ENCODE measurements at regions of chr15 and their contacts with region 1.

Region 1: DNA sequence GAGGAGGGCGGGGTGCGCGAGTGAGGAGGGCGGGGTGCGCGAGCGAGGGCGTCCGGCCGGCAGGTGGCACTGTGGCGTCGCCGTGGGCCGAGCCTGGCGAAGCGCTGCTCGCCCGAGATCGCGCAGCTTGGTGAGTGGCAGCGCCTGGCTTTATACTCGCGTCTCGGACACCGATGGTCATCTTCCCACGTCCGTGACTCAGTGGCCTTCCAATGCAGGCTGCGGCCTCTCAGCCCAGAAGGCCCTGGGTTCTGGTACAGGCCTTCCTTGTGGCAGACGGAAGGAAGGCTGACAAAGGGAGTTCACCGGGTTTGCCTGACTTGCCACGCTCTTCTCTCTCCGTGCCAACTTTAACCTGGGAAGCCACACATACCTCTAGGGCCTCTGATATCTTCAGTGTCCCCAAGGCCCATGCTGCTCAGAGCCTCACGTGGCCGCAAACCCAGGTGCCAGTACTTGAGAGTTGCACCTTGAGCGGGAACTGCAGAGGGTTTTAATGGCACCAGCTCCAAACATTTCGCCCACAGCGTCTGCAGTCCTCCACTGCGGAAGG is 195.3 kb upstream of the LYSMD4 start:
- DNase-seq: peak; percentile 45
- ATAC-seq: peak; percentile 98
- H3K4me3 ChIP-seq: peak overlapping the region; percentile 75
- H3K27ac ChIP-seq: 0 out of 2 replicates have a peak overlapping the region, but pooled peaks have one; percentile 11
- H3K4me1 ChIP-seq: peaks cover 9% of the 10 kb centered on the region
- H3K27me3 ChIP-seq: no peaks in the 10 kb centered on the region; a peak in 2 of 4 replicates
- CTCF ChIP-seq: peak; percentile 53 to 74 (median 62); a peak in 5 of 6 replicates
- EP300 ChIP-seq: no peak
- POLR2A ChIP-seq: no peak; the same call in 1 of the 2 replicates
- RAD21 ChIP-seq: peak; percentile 51

Region 2: DNA sequence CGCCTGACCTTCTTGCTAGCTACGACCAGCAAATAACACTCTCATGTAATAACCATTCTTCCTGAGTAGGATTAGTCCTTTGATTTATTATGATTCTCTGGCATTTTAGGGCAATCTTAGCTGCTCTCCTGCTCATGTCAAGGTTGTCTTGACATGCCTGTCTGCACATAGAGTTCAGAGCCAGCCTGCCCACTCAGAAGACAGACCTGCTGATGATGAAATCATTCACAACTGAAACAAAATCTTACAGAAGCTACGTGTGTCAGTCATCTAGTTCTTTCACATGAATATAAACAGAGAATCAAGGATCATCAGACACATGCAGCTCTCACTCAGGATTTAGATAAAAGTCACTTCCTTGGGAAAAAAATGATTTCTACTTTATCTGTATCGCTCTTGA is 21.7 kb before region 1 on chr15:
- CTCF ChIA-PET with region 1: no interaction called
- POLR2A ChIA-PET with region 1: no interaction called
- RAD21 ChIA-PET with region 1: no interaction called
- SMC1A ChIA-PET with region 1: no interaction called
- in situ Hi-C with region 1: no loop called
- intact Hi-C with region 1: no loop called
- DNase-seq: no peak
- ATAC-seq: no peak
- H3K4me3 ChIP-seq: no peak overlapping the region
- H3K27ac ChIP-seq: no peak overlapping the region
- H3K4me1 ChIP-seq: no peaks in the 10 kb centered on the region
- H3K27me3 ChIP-seq: no peaks in the 10 kb centered on the region
- CTCF ChIP-seq: no peak
- EP300 ChIP-seq: no peak
- POLR2A ChIP-seq: no peak
- RAD21 ChIP-seq: no peak

Region 3: GRCh38 chr15:100131321-100132224 is 203.1 kb after region 1 on chr15:
- CTCF ChIA-PET with region 1: no interaction called
- POLR2A ChIA-PET with region 1: no interaction called
- RAD21 ChIA-PET with region 1: no interaction called
- SMC1A ChIA-PET with region 1: no interaction called
- in situ Hi-C with region 1: no loop called
- intact Hi-C with region 1: no loop called
- DNase-seq: no peak
- ATAC-seq: no peak
- H3K4me3 ChIP-seq: no peak overlapping the region
- H3K27ac ChIP-seq: no peak overlapping the region
- H3K4me1 ChIP-seq: no peaks in the 10 kb centered on the region
- H3K27me3 ChIP-seq: no peaks in the 10 kb centered on the region
- CTCF ChIP-seq: peak in 1 of 3 experiments; percentile 40; a peak in 1 of 6 replicates
- EP300 ChIP-seq: no peak
- POLR2A ChIP-seq: no peak
- RAD21 ChIP-seq: peak; percentile 41

Region 4: GRCh38 chr15:100383302-100384107 is 455.0 kb after region 1 on chr15:
- CTCF ChIA-PET with region 1: interaction called, 3 read pairs
- POLR2A ChIA-PET with region 1: no interaction called
- RAD21 ChIA-PET with region 1: interaction called, 4 read pairs
- SMC1A ChIA-PET with region 1: no interaction called
- in situ Hi-C with region 1: no loop called
- intact Hi-C with region 1: loop called (anchors 2 kb)
- DNase-seq: no peak
- ATAC-seq: no peak
- H3K4me3 ChIP-seq: no peak overlapping the region
- H3K27ac ChIP-seq: no peak overlapping the region
- H3K4me1 ChIP-seq: no peaks in the 10 kb centered on the region
- H3K27me3 ChIP-seq: no peaks in the 10 kb centered on the region
- CTCF ChIP-seq: peak in 2 of 3 experiments; percentile 20 to 31; a peak in 3 of 6 replicates
- EP300 ChIP-seq: no peak
- POLR2A ChIP-seq: no peak
- RAD21 ChIP-seq: peak; percentile 62

Region 5: GRCh38 chr15:100572362-100572983 is 644.0 kb after region 1 on chr15:
- CTCF ChIA-PET with region 1: interaction called, 5 read pairs
- POLR2A ChIA-PET with region 1: no interaction called
- RAD21 ChIA-PET with region 1: interaction called, 3 read pairs
- SMC1A ChIA-PET with region 1: interaction called, 5 read pairs
- in situ Hi-C with region 1: no loop called
- intact Hi-C with region 1: loop called (anchors 5 kb)
- DNase-seq: no peak
- ATAC-seq: no peak
- H3K4me3 ChIP-seq: no peak overlapping the region
- H3K27ac ChIP-seq: no peak overlapping the region
- H3K4me1 ChIP-seq: peaks cover 9% of the 10 kb centered on the region
- H3K27me3 ChIP-seq: no peaks in the 10 kb centered on the region
- CTCF ChIP-seq: peak in 2 of 3 experiments; percentile 1 to 32; a peak in 2 of 6 replicates
- EP300 ChIP-seq: no peak
- POLR2A ChIP-seq: no peak
- RAD21 ChIP-seq: no peak

Region 6: DNA sequence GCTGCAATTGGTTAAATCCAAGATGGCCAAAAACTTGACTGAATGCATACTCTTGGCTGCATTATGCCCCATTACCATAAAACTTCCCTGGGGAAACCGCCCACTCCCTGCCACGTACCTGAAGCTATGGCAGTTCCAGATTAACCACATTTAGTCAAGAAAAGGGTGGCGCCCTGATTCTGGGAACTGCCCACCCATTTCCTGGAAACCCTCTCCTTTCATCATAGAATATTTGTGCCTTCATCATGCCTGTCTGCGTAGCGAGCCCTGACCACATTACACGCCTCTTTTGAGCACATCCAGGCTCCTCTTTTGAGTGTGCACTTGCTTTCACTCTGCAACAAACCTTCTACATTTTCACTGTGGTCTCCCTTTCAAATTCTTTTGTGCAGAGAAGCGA is 668.3 kb after region 1 on chr15:
- CTCF ChIA-PET with region 1: no interaction called
- POLR2A ChIA-PET with region 1: no interaction called
- RAD21 ChIA-PET with region 1: no interaction called
- SMC1A ChIA-PET with region 1: no interaction called
- in situ Hi-C with region 1: loop called (anchors 10 kb)
- intact Hi-C with region 1: no loop called
- DNase-seq: peak; percentile 74
- ATAC-seq: peak; percentile 86
- H3K4me3 ChIP-seq: peak overlapping the region; percentile 55
- H3K27ac ChIP-seq: peak overlapping the region; percentile 81
- H3K4me1 ChIP-seq: peaks cover 19% of the 10 kb centered on the region
- H3K27me3 ChIP-seq: no peaks in the 10 kb centered on the region
- CTCF ChIP-seq: no peak
- EP300 ChIP-seq: 0 out of 4 replicates have a peak, but pooled peaks of 1 of the 2 experiments have one; percentile 14
- POLR2A ChIP-seq: no peak
- RAD21 ChIP-seq: no peak